ENCODE measurements at regions of chr12 and their contacts with region 1.

Region 1: GRCh38 chr12:132162508-132163031 is 18.3 kb downstream of the NOC4L start:
- DNase-seq: peak in 2 of 3 donors; percentile 61 to 73
- H3K4me3 ChIP-seq: peak overlapping the region in 2 of 7 experiments; percentile 4 to 28
- H3K27ac ChIP-seq: no peak overlapping the region
- H3K4me1 ChIP-seq: peaks cover 0 to 16% (median 11%) of the 10 kb centered on the region in 4 experiments
- H3K27me3 ChIP-seq: peaks cover 0 to 23% (median 2%) of the 10 kb centered on the region in 5 experiments

Region 2: DNA sequence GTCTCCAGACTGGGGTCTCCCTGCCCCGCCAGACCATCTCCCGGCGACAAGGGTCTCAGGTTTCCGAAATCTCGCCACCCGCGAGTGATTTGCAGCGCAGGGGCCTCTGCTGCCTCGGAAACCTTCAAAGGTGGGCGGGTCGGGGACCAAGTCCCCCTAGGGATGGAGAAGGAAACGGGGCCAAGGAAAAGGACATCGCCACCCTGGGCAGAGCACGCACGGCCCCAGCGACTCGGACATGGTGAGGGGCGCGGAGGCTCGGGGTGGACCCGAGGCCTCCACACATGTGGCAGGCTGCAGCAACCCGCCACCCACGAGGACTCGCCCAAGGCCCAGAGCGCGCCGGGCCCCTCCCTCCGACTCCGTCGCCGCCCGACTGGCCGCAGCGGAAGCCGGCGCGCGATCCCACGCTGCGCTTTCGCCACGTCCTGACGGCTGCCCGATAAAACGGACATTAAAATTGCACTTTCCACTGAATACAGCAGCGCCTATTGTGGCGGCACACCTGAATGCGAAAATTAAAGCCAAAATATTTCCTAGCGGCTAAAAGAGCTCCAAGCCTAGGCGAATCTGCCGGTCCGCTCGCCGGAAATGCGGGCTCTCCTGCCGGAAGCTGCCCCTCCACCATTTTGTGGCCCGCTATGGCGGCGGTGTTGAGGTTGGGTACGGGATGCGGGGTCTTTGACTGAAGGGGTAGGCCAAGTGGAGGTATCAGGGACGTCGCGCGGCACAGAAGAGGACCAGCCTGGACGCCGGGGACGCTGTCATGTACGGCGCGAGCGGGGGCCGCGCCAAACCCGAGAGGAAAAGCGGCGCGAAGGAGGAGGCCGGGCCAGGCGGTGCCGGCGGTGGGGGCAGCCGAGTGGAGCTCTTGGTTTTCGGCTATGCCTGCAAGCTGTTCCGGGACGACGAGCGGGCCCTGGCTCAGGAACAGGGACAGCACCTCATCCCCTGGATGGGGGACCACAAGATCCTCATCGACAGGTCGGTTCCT is 451.8 kb before region 1 on chr12 and contains the start of gene SFSWAP:
- CTCF ChIA-PET with region 1: no interaction called
- POLR2A ChIA-PET with region 1: no interaction called
- DNase-seq: peak; percentile 81 to 84 (median 82)
- H3K4me3 ChIP-seq: peak within 1 kb of the TSS; percentile 78 to 100 (median 96)
- H3K27ac ChIP-seq: peak within 1 kb of the TSS; percentile 100
- H3K4me1 ChIP-seq: peaks cover 4 to 22% (median 17%) of the 10 kb centered on the region in 4 experiments
- H3K27me3 ChIP-seq: peaks cover 0 to 2% (median 0%) of the 10 kb centered on the region in 5 experiments

Region 3: DNA sequence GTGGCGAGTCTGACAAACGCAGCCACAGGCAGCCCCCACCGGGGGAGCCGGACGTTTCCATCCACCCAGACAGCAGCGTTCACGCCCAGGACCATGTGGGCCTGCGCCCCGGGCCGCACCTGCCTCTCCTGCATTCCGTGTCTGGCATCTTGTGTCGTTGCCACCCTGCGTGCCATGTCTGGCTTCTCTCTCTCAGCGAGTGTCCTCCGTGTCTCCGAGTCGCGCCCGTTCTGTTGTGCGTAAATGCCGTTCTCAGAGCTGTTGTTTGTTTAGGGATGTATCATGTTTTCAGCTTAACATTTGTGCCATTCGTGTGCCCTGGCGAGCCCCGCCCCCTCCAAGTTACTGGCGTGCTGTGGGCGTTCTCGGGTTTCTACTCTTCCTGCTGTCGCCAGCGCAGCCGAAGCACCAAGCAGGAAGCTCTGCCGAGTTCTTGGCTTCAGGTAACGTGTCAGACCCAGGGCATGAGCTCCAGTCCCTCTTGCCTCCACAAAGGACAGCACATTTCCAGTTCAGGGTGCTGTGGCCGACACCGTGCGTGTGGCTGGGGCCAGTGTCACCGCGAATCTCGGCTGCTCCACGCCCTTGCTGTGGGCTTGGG is 16.3 kb after region 1 on chr12:
- CTCF ChIA-PET with region 1: interaction called, 11 read pairs
- POLR2A ChIA-PET with region 1: no interaction called
- DNase-seq: no peak
- H3K4me3 ChIP-seq: no peak overlapping the region
- H3K27ac ChIP-seq: no peak overlapping the region
- H3K4me1 ChIP-seq: peaks cover 0 to 14% (median 7%) of the 10 kb centered on the region in 4 experiments
- H3K27me3 ChIP-seq: peaks cover 0 to 64% (median 4%) of the 10 kb centered on the region in 5 experiments

Measured in common myeloid progenitor, CD34-positive (primary cell).